Activated CD4-positive, alpha-beta memory T cell treated with anti-CD3 and anti-CD28 coated beads for 36 hours (primary cell): ENCODE measurements at regions of chr2 and their contacts with region 1.

Region 1: DNA sequence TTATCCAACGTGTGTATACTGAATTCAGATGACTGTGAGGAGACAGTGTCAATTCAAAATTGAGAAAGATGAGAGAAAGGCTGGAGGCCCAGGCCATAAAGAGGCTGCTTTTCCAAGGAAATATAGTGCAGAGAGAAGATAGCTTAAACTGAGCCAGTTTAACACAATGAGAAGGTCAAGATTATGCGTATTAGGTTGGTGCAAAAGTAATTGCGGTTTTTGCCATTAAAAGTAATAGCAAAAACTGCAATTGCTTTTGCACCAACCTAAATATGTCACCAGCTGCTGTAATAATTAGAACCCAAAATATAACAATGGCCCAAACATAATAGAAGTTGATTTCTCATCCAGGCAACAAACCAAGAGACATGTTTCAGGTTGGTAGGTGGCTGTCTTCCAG is 148.7 kb upstream of the ATP5MC3 start:
- DNase-seq: no peak
- H3K4me3 Mint-ChIP-seq: no peak overlapping the region
- H3K27ac Mint-ChIP-seq: no peak overlapping the region
- H3K4me1 Mint-ChIP-seq: no peaks in the 10 kb centered on the region
- H3K27me3 Mint-ChIP-seq: no peaks in the 10 kb centered on the region

Region 2: DNA sequence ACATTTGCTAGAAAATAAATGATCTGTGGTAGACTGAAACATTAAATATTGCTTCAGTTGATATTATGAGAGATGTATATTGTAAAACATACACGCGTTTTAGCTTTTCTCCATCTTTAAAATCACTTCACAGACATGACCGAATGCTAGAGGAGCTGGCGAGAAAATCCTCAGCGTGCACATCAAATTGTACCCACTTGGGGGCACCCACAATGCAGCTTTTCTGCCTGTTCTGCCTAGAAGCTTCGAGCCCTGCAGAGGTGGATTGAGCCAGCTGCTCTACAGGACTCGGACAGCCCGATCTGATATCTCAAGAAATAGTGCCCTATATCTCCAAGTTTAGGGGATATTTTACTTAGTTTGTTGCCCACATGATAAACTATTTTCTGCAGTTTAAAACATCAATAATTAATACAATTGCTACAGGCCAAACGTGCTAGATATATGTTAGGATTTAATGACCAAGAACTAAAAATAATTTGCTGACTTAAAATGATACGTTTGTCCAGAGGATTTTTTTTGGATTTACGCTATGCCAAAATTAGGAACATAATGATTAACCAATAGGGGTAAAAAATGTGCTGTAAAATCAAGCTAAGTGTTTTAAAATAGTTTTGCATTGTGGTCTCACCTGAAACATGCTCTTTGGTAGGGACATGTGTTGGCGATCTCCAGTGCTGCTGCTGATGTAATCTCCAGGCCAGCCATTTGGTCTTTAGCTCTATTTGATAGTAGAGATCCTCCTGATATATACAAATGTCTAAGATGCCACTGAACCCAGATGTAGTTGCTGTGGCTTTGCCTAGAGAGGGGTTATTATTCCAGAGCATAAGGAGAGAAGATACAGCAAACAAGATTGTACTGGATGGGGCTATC is 126.3 kb before region 1 on chr2:
- CTCF ChIA-PET with region 1: interaction called, 30 read pairs
- POLR2A ChIA-PET with region 1: no interaction called
- intact Hi-C with region 1: no loop called
- DNase-seq: peak; percentile 76
- H3K4me3 Mint-ChIP-seq: no peak overlapping the region
- H3K27ac Mint-ChIP-seq: no peak overlapping the region
- H3K4me1 Mint-ChIP-seq: peaks cover 6% of the 10 kb centered on the region
- H3K27me3 Mint-ChIP-seq: peaks cover 14% of the 10 kb centered on the region